Transverse colon (tissue), 4 donors: ENCODE measurements at regions of chrX and their contacts with region 1.

Region 1: GRCh38 chrX:102560423-102561068 is 38.8 kb upstream of the ARMCX5 start:
- DNase-seq: no peak
- H3K4me3 ChIP-seq: no peak overlapping the region
- H3K27ac ChIP-seq: no peak overlapping the region
- H3K4me1 ChIP-seq: no peaks in the 10 kb centered on the region
- H3K27me3 ChIP-seq: no peaks in the 10 kb centered on the region
- CTCF ChIP-seq: no peak
- EP300 ChIP-seq: no peak
- POLR2A ChIP-seq: no peak

Region 2: DNA sequence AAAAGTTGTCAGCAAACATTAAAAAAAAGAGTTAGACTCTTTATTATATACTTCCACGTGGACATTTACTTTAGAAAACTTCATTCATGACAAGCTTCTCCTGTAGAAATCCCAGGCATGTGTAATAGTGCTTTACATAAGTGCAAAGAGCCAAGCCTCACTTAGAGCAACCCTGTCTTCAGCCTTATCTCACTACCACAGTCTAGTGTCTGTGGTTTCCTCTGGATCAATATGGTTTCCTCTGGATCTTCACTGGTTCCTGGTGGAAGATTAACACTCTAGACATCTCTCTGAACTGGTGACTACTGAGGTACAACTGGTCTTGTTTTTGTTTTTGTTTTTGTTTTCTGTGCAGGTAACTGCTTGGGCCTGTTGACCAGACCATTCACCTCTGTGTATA is 20.3 kb after region 1 on chrX:
- in situ Hi-C with region 1: no loop called
- intact Hi-C with region 1: no loop called
- DNase-seq: no peak
- H3K4me3 ChIP-seq: no peak overlapping the region
- H3K27ac ChIP-seq: no peak overlapping the region
- H3K4me1 ChIP-seq: no peaks in the 10 kb centered on the region
- H3K27me3 ChIP-seq: no peaks in the 10 kb centered on the region
- CTCF ChIP-seq: no peak
- EP300 ChIP-seq: no peak
- POLR2A ChIP-seq: no peak

Region 3: DNA sequence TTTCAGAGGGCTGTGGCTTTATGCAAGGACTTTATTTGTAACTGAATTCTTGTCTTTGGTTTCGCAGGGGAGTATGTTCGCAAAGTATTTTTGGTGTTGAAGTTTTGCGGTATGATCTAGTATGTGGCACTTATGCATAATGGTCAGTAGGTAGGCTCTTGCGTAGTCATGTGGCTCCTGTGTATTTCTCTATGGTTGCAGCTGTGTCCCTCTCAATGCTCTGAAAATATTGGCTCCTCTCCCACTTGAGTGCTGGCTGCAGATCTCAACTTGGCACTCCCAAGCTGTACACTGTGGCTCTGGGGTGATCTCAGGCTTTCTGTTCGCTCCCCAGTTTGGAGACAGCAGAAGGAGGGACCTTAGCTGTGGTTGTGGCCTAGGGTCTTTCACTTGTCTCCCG is 63.6 kb after region 1 on chrX:
- in situ Hi-C with region 1: no loop called
- intact Hi-C with region 1: loop called (anchors 2 kb)
- DNase-seq: no peak
- H3K4me3 ChIP-seq: no peak overlapping the region
- H3K27ac ChIP-seq: no peak overlapping the region
- H3K4me1 ChIP-seq: no peaks in the 10 kb centered on the region
- H3K27me3 ChIP-seq: no peaks in the 10 kb centered on the region
- CTCF ChIP-seq: no peak
- EP300 ChIP-seq: no peak
- POLR2A ChIP-seq: no peak

Region 4: GRCh38 chrX:102672856-102673255 is 112.3 kb after region 1 on chrX:
- in situ Hi-C with region 1: no loop called
- intact Hi-C with region 1: no loop called
- DNase-seq: no peak
- H3K4me3 ChIP-seq: no peak overlapping the region
- H3K27ac ChIP-seq: no peak overlapping the region
- H3K4me1 ChIP-seq: no peaks in the 10 kb centered on the region
- H3K27me3 ChIP-seq: no peaks in the 10 kb centered on the region
- CTCF ChIP-seq: no peak
- EP300 ChIP-seq: no peak
- POLR2A ChIP-seq: no peak